Mammary epithelial cell (primary cell): ENCODE measurements at regions of chr2 and their contacts with region 1.

Region 1: GRCh38 chr2:42494355-42495233 is 812 bp upstream of the KCNG3 start:
- DNase-seq: peak; percentile 87
- H3K4me3 ChIP-seq: peak overlapping the region; percentile 49 to 62 (median 50)
- H3K27ac ChIP-seq: no peak overlapping the region
- H3K4me1 ChIP-seq: peaks cover 13% of the 10 kb centered on the region
- H3K27me3 ChIP-seq: peaks cover 29% of the 10 kb centered on the region
- CTCF ChIP-seq: peak; percentile 87 to 91

Region 2: GRCh38 chr2:42404676-42405075 is 89.9 kb before region 1 on chr2:
- CTCF ChIA-PET with region 1: no interaction called
- dilution Hi-C with region 1: no loop called
- in situ Hi-C with region 1: no loop called
- intact Hi-C with region 1: no loop called
- DNase-seq: no peak
- H3K4me3 ChIP-seq: no peak overlapping the region
- H3K27ac ChIP-seq: no peak overlapping the region
- H3K4me1 ChIP-seq: no peaks in the 10 kb centered on the region
- H3K27me3 ChIP-seq: no peaks in the 10 kb centered on the region
- CTCF ChIP-seq: no peak

Region 3: GRCh38 chr2:42568401-42569115 is 74.0 kb after region 1 on chr2 and contains the start of gene MTA3:
- CTCF ChIA-PET with region 1: no interaction called
- dilution Hi-C with region 1: loop called (anchors 5 kb)
- in situ Hi-C with region 1: no loop called
- intact Hi-C with region 1: no loop called
- DNase-seq: no peak
- H3K4me3 ChIP-seq: peak within 1 kb of the TSS; percentile 69 to 88 (median 73)
- H3K27ac ChIP-seq: no peak within 1 kb of the TSS
- H3K4me1 ChIP-seq: peaks cover 15% of the 10 kb centered on the region
- H3K27me3 ChIP-seq: no peaks in the 10 kb centered on the region
- CTCF ChIP-seq: no peak
- total RNA-seq, gene MTA3: 38.0 to 40.4 TPM

Region 4: GRCh38 chr2:42844901-42845821 is 350.6 kb after region 1 on chr2:
- CTCF ChIA-PET with region 1: no interaction called
- dilution Hi-C with region 1: no loop called
- in situ Hi-C with region 1: no loop called
- intact Hi-C with region 1: no loop called
- DNase-seq: no peak
- H3K4me3 ChIP-seq: no peak overlapping the region
- H3K27ac ChIP-seq: no peak overlapping the region
- H3K4me1 ChIP-seq: no peaks in the 10 kb centered on the region
- H3K27me3 ChIP-seq: no peaks in the 10 kb centered on the region
- CTCF ChIP-seq: no peak